PC-3 (cell line): ENCODE measurements at regions of chr6 and their contacts with region 1.

Region 1: GRCh38 chr6:111417181-111417585 is 65.8 kb downstream of the REV3L start:
- DNase-seq: no peak
- ATAC-seq: peak; percentile 54; the same call in 1 of the 2 replicates
- H3K4me3 ChIP-seq: no peak overlapping the region
- H3K27ac ChIP-seq: no peak overlapping the region
- H3K4me1 ChIP-seq: peaks cover 34% of the 10 kb centered on the region
- H3K27me3 ChIP-seq: no peaks in the 10 kb centered on the region
- CTCF ChIP-seq: no peak

Region 2: GRCh38 chr6:111468329-111469012 is 51.3 kb after region 1 on chr6:
- CTCF ChIA-PET with region 1: no interaction called
- POLR2A ChIA-PET with region 1: no interaction called
- intact Hi-C with region 1: no loop called
- DNase-seq: peak; percentile 74
- ATAC-seq: peak; percentile 76
- H3K4me3 ChIP-seq: no peak overlapping the region
- H3K27ac ChIP-seq: peak overlapping the region; percentile 75
- H3K4me1 ChIP-seq: peaks cover 28% of the 10 kb centered on the region
- H3K27me3 ChIP-seq: no peaks in the 10 kb centered on the region
- CTCF ChIP-seq: no peak

Region 3: DNA sequence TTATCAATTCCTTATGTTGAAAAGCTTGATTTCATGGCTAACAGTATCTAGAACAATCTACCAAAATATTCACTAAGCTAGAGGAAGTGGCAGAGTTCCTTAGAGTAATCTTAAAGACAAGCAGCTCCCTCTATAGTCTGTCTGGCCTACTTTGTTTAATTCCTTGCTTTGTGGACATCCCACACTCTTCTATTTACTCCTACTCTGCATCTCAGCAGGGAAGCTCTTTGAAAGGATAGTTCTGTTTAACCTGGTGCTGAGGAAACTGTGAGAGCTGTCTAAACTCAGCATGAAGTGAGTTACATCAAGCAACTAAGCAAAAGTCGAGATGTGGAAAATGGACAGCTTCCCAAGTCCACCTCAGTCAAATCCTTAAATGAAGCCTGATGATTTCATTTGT is 61.6 kb after region 1 on chr6:
- CTCF ChIA-PET with region 1: no interaction called
- POLR2A ChIA-PET with region 1: no interaction called
- intact Hi-C with region 1: loop called (anchors 5 kb)
- DNase-seq: peak; percentile 57
- ATAC-seq: peak; percentile 35
- H3K4me3 ChIP-seq: no peak overlapping the region
- H3K27ac ChIP-seq: no peak overlapping the region
- H3K4me1 ChIP-seq: peaks cover 27% of the 10 kb centered on the region
- H3K27me3 ChIP-seq: no peaks in the 10 kb centered on the region
- CTCF ChIP-seq: peak; percentile 62

Region 4: GRCh38 chr6:111911428-111911827 is 494.2 kb after region 1 on chr6:
- CTCF ChIA-PET with region 1: no interaction called
- POLR2A ChIA-PET with region 1: no interaction called
- intact Hi-C with region 1: no loop called
- DNase-seq: no peak
- ATAC-seq: no peak
- H3K4me3 ChIP-seq: no peak overlapping the region
- H3K27ac ChIP-seq: no peak overlapping the region
- H3K4me1 ChIP-seq: no peaks in the 10 kb centered on the region
- H3K27me3 ChIP-seq: no peaks in the 10 kb centered on the region
- CTCF ChIP-seq: no peak